Panc1 (cell line): ENCODE measurements at regions of chr5 and their contacts with region 1.

Region 1: DNA sequence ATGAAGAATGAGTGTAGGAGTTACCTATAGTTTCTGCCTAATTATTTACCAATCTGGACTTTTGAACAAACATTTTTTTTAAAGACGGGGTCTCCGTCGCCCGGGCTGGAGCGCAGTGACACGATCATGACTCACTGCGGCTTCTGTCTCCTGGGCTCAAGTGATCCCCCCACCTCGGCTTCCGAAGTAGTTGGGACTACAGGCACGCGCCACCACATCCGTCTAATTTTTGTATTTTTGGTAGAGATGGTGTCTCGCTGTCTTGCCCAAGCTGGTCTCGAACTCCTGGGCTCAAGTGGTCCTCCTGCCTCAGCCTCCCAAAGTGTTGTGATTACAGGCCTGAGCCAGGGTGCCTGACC is 1.5 kb downstream of the CTNNA1 start:
- DNase-seq: no peak
- ATAC-seq: no peak
- H3K4me3 ChIP-seq: peak overlapping the region; percentile 88 to 95
- H3K27ac ChIP-seq: peak overlapping the region; percentile 95
- H3K4me1 ChIP-seq: peaks cover 11% of the 10 kb centered on the region
- H3K27me3 ChIP-seq: no peaks in the 10 kb centered on the region
- CTCF ChIP-seq: no peak

Region 2: GRCh38 chr5:138696503-138697191 is 58.0 kb before region 1 on chr5:
- CTCF ChIA-PET with region 1: no interaction called
- POLR2A ChIA-PET with region 1: no interaction called
- in situ Hi-C with region 1: no loop called
- intact Hi-C with region 1: no loop called
- DNase-seq: no peak
- ATAC-seq: peak; percentile 90
- H3K4me3 ChIP-seq: no peak overlapping the region
- H3K27ac ChIP-seq: no peak overlapping the region
- H3K4me1 ChIP-seq: no peaks in the 10 kb centered on the region
- H3K27me3 ChIP-seq: no peaks in the 10 kb centered on the region
- CTCF ChIP-seq: no peak

Region 3: DNA sequence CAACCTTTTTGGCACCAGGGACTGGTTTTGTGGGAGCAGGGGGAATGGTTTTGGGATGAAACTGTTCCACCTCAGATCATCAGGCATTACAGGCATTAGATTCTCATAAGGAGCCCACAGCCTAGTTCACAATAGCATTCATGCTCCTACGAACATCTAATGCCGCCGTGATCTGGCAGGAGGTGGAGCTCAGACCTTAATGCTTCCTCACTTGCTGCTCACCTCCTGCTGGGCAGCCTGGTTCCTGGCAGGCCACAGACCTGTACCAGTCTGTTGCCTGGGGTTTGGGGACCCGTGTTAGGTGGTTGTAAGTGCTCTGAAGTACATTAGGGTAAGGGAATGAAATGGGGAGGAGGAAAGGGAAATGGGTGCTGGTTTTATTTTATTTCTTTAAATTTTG is 11.2 kb before region 1 on chr5:
- CTCF ChIA-PET with region 1: no interaction called
- POLR2A ChIA-PET with region 1: interaction called, 16 read pairs
- in situ Hi-C with region 1: no loop called
- intact Hi-C with region 1: no loop called
- DNase-seq: no peak
- ATAC-seq: no peak
- H3K4me3 ChIP-seq: no peak overlapping the region
- H3K27ac ChIP-seq: no peak overlapping the region
- H3K4me1 ChIP-seq: no peaks in the 10 kb centered on the region
- H3K27me3 ChIP-seq: no peaks in the 10 kb centered on the region
- CTCF ChIP-seq: no peak